Heart left ventricle (tissue), 16 donors: ENCODE measurements at regions of chr20 and their contacts with region 1.

Region 1: GRCh38 chr20:44615169-44615791 is 32.9 kb downstream of the PKIG start:
- DNase-seq: peak in 4 of 5 donors; percentile 53 to 67 (median 66)
- ATAC-seq: peak; percentile 4 to 58 (median 28)
- H3K4me3 ChIP-seq: no peak overlapping the region
- H3K27ac ChIP-seq: peak overlapping the region; percentile 55 to 86 (median 74)
- H3K4me1 ChIP-seq: peaks cover 13 to 82% (median 51%) of the 10 kb centered on the region in 12 donors
- H3K27me3 ChIP-seq: no peaks in the 10 kb centered on the region
- CTCF ChIP-seq: peak in 1 of 12 donors; percentile 11
- POLR2A ChIP-seq: no peak

Region 2: GRCh38 chr20:44475694-44476560 is 139.4 kb before region 1 on chr20 and contains the start of gene TTPAL:
- intact Hi-C with region 1: loop called in 5 of 10 experiments (anchors 5 to 10 kb)
- DNase-seq: peak; percentile 88 to 94 (median 91)
- ATAC-seq: peak; percentile 93 to 98 (median 98)
- H3K4me3 ChIP-seq: peak within 1 kb of the TSS; percentile 60 to 90 (median 76)
- H3K27ac ChIP-seq: peak within 1 kb of the TSS; percentile 58 to 97 (median 90)
- H3K4me1 ChIP-seq: peaks cover 0 to 20% (median 11%) of the 10 kb centered on the region in 12 donors
- H3K27me3 ChIP-seq: no peaks in the 10 kb centered on the region
- CTCF ChIP-seq: peak in 10 of 12 donors; percentile 17 to 62 (median 40)
- POLR2A ChIP-seq: peak; percentile 88 to 98
- total RNA-seq, gene TTPAL: 2.8 to 6.0 (median 4.2) TPM

Region 3: DNA sequence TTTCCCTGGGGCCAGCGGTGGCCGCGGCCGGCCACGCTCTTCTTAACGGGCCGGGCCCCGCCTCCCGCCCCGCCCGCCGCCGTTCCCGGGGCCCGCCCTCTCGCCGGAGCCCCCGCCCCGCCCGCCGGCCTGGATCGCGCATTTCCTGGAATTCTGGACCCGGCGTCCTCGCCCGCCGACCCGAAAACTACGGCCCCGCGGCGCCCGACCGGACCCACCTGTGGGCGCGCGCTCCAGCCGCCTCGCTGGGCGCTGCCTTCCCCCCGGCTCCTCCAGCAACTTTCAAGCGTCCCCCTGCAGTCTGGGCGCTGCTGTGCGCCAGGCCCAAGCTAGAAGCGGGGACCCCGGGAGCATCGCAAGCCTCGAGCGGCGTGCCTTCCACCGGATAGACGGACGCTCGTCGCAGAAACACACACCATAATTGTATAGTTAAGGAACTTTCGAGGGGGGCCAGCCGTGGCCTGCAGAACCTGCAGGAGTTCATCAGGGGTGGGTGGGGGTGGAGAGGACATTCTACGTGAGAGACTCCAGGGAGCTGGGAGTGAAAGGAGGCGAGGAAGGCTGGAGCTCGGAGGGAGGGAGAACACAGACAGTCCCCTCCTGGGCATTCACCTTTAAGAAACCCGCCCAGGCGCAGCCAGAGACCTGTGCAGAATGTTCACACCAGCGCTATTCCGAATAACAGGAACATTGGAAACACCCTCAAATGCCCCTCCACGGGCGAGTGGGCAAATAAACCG is 36.6 kb after region 1 on chr20 and contains the start of gene ADA:
- intact Hi-C with region 1: loop called in 3 of 10 experiments (anchors 1 to 5 kb)
- DNase-seq: peak; percentile 73 to 87 (median 78)
- ATAC-seq: peak; percentile 23 to 90 (median 77)
- H3K4me3 ChIP-seq: peak within 1 kb of the TSS; percentile 55 to 91 (median 78)
- H3K27ac ChIP-seq: peak within 1 kb of the TSS; percentile 64 to 96 (median 92)
- H3K4me1 ChIP-seq: peaks cover 0 to 52% (median 16%) of the 10 kb centered on the region in 12 donors
- H3K27me3 ChIP-seq: no peaks in the 10 kb centered on the region
- CTCF ChIP-seq: peak in 2 of 12 donors; percentile 6
- POLR2A ChIP-seq: peak in 1 of 2 donors; percentile 67
- total RNA-seq, gene ADA: 2.5 to 11.5 (median 6.0) TPM

Region 4: DNA sequence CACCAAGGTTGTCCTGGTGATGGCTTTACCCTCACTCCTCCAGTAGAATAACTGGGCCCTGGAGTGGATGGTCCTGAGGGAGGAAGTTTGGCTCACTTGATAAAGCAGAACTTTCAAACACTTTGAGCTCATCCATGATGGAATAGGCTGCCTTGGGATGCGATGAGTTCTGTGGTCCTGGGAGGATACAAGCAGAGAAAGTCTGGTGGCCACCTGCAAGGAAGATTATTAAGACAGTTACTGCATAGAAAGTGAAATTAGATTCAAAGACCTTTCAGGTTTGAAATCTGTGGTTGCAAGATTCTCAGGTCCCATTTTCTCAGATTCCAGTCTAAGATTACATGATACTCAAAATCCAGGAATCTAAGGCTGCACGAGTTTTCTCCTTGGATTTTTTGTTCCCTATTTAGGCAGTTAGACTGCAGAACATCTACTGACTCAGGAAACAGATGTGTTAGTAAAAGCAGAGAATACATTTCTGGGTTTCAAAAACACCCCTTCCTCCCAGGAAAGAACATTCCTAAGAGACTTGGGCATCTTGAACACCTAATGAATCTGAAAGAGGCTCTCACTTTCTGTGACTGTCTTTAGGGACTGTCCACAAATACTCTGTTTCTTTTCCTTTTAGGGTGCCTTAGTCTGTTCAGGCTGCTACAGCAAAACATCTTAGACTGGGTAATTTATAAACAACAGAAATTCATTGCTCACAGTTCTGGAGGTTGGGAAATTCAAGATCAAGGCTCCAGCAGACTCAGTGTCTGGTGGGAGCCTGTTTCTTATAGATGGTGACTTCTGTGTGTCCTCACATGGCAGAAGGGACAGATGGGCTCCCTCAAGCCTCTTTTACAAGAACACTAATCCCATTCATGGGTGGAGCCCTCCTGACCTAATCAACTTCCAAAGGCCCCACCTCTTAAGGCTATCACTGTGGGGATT is 80.3 kb after region 1 on chr20:
- intact Hi-C with region 1: no loop called
- DNase-seq: no peak
- ATAC-seq: no peak
- H3K4me3 ChIP-seq: no peak overlapping the region
- H3K27ac ChIP-seq: peak overlapping the region in 10 of 12 donors; percentile 4 to 78 (median 42)
- H3K4me1 ChIP-seq: peaks cover 0 to 51% (median 33%) of the 10 kb centered on the region in 12 donors
- H3K27me3 ChIP-seq: no peaks in the 10 kb centered on the region
- CTCF ChIP-seq: no peak
- POLR2A ChIP-seq: no peak